Posterior vena cava (tissue), 2 donors: ENCODE measurements at regions of chr14 and their contacts with region 1.

Region 1: GRCh38 chr14:97777622-97778355 is 980.6 kb downstream of the VRK1 start:
- DNase-seq: no peak

Region 2: GRCh38 chr14:97757491-97757890 is 20.3 kb before region 1 on chr14:
- intact Hi-C with region 1: loop called in 1 of 2 experiments (anchors 1 kb)
- DNase-seq: no peak